Activated B cell treated with CpG ODN at 0.5 μM for 24 hours (primary cell): ENCODE measurements at regions of chr3 and their contacts with region 1.

Region 1: GRCh38 chr3:152399374-152399773 is 130.6 kb downstream of the MBNL1 start:
- DNase-seq: no peak
- ATAC-seq: no peak
- H3K4me3 Mint-ChIP-seq: no peak overlapping the region
- H3K27ac Mint-ChIP-seq: peak overlapping the region; percentile 42
- H3K4me1 Mint-ChIP-seq: peaks cover 73% of the 10 kb centered on the region
- H3K27me3 Mint-ChIP-seq: no peaks in the 10 kb centered on the region
- CTCF ChIP-seq: no peak

Region 2: GRCh38 chr3:151946606-151947005 is 452.8 kb before region 1 on chr3:
- CTCF ChIA-PET with region 1: no interaction called
- POLR2A ChIA-PET with region 1: no interaction called
- intact Hi-C with region 1: no loop called
- DNase-seq: no peak
- ATAC-seq: no peak
- H3K4me3 Mint-ChIP-seq: no peak overlapping the region
- H3K27ac Mint-ChIP-seq: no peak overlapping the region
- H3K4me1 Mint-ChIP-seq: no peaks in the 10 kb centered on the region
- H3K27me3 Mint-ChIP-seq: peaks cover 3% of the 10 kb centered on the region
- CTCF ChIP-seq: no peak

Region 3: GRCh38 chr3:152385761-152386160 is 13.6 kb before region 1 on chr3:
- CTCF ChIA-PET with region 1: interaction called, 3 read pairs
- POLR2A ChIA-PET with region 1: interaction called, 4 read pairs
- intact Hi-C with region 1: loop called (anchors 2 kb)
- DNase-seq: no peak
- ATAC-seq: no peak
- H3K4me3 Mint-ChIP-seq: no peak overlapping the region
- H3K27ac Mint-ChIP-seq: peak overlapping the region; percentile 24
- H3K4me1 Mint-ChIP-seq: peaks cover 72% of the 10 kb centered on the region
- H3K27me3 Mint-ChIP-seq: no peaks in the 10 kb centered on the region
- CTCF ChIP-seq: no peak

Region 4: DNA sequence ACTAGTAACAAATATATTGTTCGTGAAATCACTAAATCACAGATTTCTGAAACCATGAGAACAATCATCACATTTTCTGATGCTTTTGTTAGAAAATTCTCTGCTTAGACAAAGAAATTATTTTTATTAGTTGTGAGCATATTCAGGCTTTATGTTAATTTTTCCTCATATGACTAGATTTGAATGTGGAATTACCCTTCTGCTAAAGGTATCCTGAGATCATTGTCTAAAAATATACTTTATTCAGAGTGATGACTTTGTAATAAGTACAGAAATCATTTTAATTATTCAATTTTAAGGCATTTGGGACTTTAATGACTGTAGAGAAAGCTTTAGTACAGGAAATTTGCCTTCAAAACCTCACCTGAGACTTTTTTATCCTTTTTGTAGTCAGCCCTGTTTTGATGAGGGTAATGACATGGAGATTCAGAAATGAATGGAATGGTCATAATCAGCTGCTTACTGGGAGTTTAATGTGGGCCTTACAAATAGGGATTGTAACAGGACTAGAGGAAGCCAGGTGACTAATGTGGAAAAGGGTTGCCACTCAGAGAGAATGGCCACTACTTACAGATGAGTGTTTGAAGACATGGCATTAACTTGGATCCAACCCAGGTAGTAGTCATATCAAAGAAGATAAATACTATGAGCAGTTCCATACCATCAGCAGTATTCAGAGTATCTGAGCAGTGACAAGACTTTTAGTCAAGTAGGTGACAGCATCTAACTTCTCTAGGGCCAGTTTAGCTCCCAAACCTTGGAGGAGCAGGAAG is 17.6 kb after region 1 on chr3:
- CTCF ChIA-PET with region 1: no interaction called
- POLR2A ChIA-PET with region 1: no interaction called
- intact Hi-C with region 1: loop called (anchors 2 kb)
- DNase-seq: no peak
- ATAC-seq: no peak
- H3K4me3 Mint-ChIP-seq: no peak overlapping the region
- H3K27ac Mint-ChIP-seq: peak overlapping the region; percentile 21
- H3K4me1 Mint-ChIP-seq: peaks cover 41% of the 10 kb centered on the region
- H3K27me3 Mint-ChIP-seq: no peaks in the 10 kb centered on the region
- CTCF ChIP-seq: no peak

Region 5: DNA sequence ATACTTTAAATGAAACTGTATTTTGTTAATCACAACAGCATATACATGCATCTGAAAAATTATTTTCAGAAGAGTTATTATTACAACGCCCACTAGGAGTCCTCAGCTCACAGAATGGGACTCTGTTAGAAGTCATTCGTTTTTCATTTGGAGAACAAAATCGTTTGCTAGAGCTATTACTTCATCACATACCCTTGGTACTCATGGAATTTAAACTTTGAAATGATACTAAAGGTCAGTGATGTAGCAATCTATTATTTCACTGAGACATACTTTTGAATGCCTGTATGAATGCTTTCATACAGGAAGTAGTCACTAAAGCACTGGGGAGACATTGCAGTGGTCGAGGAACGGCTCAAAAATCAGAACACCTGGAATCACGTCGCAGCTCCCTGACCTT is 67.4 kb after region 1 on chr3:
- CTCF ChIA-PET with region 1: no interaction called
- POLR2A ChIA-PET with region 1: no interaction called
- intact Hi-C with region 1: no loop called
- DNase-seq: no peak
- ATAC-seq: peak; percentile 69
- H3K4me3 Mint-ChIP-seq: no peak overlapping the region
- H3K27ac Mint-ChIP-seq: peak overlapping the region; percentile 71
- H3K4me1 Mint-ChIP-seq: peaks cover 22% of the 10 kb centered on the region
- H3K27me3 Mint-ChIP-seq: no peaks in the 10 kb centered on the region
- CTCF ChIP-seq: no peak

Region 6: GRCh38 chr3:152656214-152656971 is 257.0 kb after region 1 on chr3:
- CTCF ChIA-PET with region 1: no interaction called
- POLR2A ChIA-PET with region 1: no interaction called
- intact Hi-C with region 1: no loop called
- DNase-seq: no peak
- ATAC-seq: no peak
- H3K4me3 Mint-ChIP-seq: no peak overlapping the region
- H3K27ac Mint-ChIP-seq: no peak overlapping the region
- H3K4me1 Mint-ChIP-seq: peaks cover 8% of the 10 kb centered on the region
- H3K27me3 Mint-ChIP-seq: peaks cover 16% of the 10 kb centered on the region
- CTCF ChIP-seq: no peak